Activated T-helper 1 cell treated with anti-CD3 and anti-CD28 coated beads, Interleukin-12 subunit alpha, Interleukin-12 subunit beta, Interleukin-2, Interleukin-4 antibody, amounts not matched to agents 30 ng/mL and 10 ng/mL and 1 ng/mL, durations not matched to agents 14 hours and 24 hours and 36 hours (primary cell): ENCODE measurements at regions of chr4 and their contacts with region 1.

Region 1: DNA sequence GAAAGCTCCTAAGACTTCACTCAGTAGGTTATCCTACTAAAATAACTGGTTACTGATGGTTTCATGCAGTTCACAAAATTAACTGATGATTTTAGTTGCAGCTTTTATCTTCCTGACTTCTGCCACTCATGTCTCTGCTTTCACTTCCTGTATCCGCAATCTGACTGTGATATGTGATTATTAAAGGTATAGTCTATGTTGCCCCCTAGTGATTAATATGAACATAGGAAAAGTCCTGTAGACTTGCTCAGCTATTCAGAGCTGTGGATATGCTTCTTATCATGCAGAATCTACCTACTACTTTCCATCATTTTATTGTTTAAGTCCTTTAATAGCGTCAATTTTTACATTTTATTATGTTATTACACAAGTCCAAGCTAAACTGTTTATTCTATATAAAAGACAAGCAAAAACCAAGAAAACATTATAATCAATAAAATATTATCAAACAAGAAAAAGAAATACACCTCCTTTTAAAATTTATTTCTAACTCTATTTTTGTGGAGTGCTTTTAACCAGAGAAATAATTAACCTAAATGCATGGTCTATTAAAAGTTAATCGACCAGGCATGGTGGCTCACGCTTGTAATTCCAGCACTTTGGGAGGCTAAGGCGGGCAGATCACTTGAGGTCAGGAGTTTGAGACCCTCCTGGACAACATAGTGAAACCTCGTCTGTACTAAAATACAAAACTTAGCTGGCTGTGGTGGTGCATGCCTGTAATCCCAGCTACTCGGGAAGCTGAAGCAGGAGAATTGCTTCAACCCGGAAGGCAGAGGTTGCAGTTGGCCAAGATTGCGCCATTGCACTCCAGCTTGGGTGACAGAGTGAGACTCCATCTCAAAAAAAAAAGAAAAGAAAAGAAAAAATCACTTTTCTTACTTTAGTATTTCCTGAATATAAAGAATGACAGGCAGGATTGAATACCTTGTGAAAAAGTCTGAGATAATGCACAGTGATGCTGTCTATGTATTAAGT is 40.4 kb upstream of the TLR2 start:
- DNase-seq: no peak
- H3K4me3 Mint-ChIP-seq: no peak overlapping the region
- H3K27ac Mint-ChIP-seq: no peak overlapping the region
- H3K4me1 Mint-ChIP-seq: peaks cover 22% of the 10 kb centered on the region
- H3K27me3 Mint-ChIP-seq: no peaks in the 10 kb centered on the region

Region 2: GRCh38 chr4:152843481-152844090 is 800.1 kb before region 1 on chr4:
- intact Hi-C with region 1: loop called (anchors 10 kb)
- DNase-seq: no peak
- H3K4me3 Mint-ChIP-seq: no peak overlapping the region
- H3K27ac Mint-ChIP-seq: no peak overlapping the region
- H3K4me1 Mint-ChIP-seq: peaks cover 20% of the 10 kb centered on the region
- H3K27me3 Mint-ChIP-seq: no peaks in the 10 kb centered on the region

Region 3: GRCh38 chr4:153115322-153116290 is 528.1 kb before region 1 on chr4:
- intact Hi-C with region 1: no loop called
- DNase-seq: peak; percentile 69
- H3K4me3 Mint-ChIP-seq: peak overlapping the region; percentile 56
- H3K27ac Mint-ChIP-seq: peak overlapping the region; percentile 80
- H3K4me1 Mint-ChIP-seq: no peaks in the 10 kb centered on the region
- H3K27me3 Mint-ChIP-seq: peaks cover 6% of the 10 kb centered on the region

Region 4: GRCh38 chr4:153142700-153143438 is 500.8 kb before region 1 on chr4:
- intact Hi-C with region 1: loop called (anchors 2 kb)
- DNase-seq: no peak
- H3K4me3 Mint-ChIP-seq: no peak overlapping the region
- H3K27ac Mint-ChIP-seq: no peak overlapping the region
- H3K4me1 Mint-ChIP-seq: no peaks in the 10 kb centered on the region
- H3K27me3 Mint-ChIP-seq: peaks cover 22% of the 10 kb centered on the region

Region 5: GRCh38 chr4:153266988-153267387 is 376.7 kb before region 1 on chr4:
- intact Hi-C with region 1: no loop called
- DNase-seq: no peak
- H3K4me3 Mint-ChIP-seq: no peak overlapping the region
- H3K27ac Mint-ChIP-seq: no peak overlapping the region
- H3K4me1 Mint-ChIP-seq: no peaks in the 10 kb centered on the region
- H3K27me3 Mint-ChIP-seq: no peaks in the 10 kb centered on the region

Region 6: GRCh38 chr4:153616006-153616555 is 27.6 kb before region 1 on chr4:
- intact Hi-C with region 1: loop called (anchors 2 kb)
- DNase-seq: peak; percentile 16
- H3K4me3 Mint-ChIP-seq: no peak overlapping the region
- H3K27ac Mint-ChIP-seq: peak overlapping the region; percentile 29
- H3K4me1 Mint-ChIP-seq: peaks cover 26% of the 10 kb centered on the region
- H3K27me3 Mint-ChIP-seq: no peaks in the 10 kb centered on the region

Region 7: GRCh38 chr4:153750197-153750817 is 106.6 kb after region 1 on chr4:
- intact Hi-C with region 1: loop called (anchors 2 kb)
- DNase-seq: peak; percentile 52
- H3K4me3 Mint-ChIP-seq: no peak overlapping the region
- H3K27ac Mint-ChIP-seq: no peak overlapping the region
- H3K4me1 Mint-ChIP-seq: no peaks in the 10 kb centered on the region
- H3K27me3 Mint-ChIP-seq: peaks cover 31% of the 10 kb centered on the region

Region 8: DNA sequence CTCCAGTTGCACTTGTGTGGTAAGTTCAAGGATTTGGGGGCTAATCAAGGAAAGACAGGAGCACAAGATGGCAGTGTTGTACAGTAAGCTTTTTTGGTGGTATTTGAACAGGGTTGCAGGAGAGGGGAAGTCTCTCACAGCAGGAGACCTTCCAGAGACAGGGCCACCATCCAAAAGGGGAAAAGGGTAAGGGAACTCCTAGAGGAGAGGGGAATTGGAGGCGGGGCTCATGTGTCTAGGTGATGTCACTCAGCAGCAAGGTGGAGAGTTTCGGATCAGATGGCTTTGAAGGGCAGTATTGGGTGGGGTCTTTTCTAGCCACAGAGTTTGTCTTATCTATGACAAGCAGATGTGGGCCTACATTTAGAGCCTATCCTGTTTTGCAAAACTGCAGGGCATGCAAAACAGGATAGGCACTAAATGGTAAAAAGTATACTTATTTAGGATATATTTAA is 129.6 kb after region 1 on chr4:
- intact Hi-C with region 1: no loop called
- DNase-seq: no peak
- H3K4me3 Mint-ChIP-seq: no peak overlapping the region
- H3K27ac Mint-ChIP-seq: no peak overlapping the region
- H3K4me1 Mint-ChIP-seq: no peaks in the 10 kb centered on the region
- H3K27me3 Mint-ChIP-seq: peaks cover 15% of the 10 kb centered on the region